Activated naive CD4-positive, alpha-beta T cell treated with anti-CD3 and anti-CD28 coated beads for 36 hours (primary cell): ENCODE measurements at regions of chr11 and their contacts with region 1.

Region 1: DNA sequence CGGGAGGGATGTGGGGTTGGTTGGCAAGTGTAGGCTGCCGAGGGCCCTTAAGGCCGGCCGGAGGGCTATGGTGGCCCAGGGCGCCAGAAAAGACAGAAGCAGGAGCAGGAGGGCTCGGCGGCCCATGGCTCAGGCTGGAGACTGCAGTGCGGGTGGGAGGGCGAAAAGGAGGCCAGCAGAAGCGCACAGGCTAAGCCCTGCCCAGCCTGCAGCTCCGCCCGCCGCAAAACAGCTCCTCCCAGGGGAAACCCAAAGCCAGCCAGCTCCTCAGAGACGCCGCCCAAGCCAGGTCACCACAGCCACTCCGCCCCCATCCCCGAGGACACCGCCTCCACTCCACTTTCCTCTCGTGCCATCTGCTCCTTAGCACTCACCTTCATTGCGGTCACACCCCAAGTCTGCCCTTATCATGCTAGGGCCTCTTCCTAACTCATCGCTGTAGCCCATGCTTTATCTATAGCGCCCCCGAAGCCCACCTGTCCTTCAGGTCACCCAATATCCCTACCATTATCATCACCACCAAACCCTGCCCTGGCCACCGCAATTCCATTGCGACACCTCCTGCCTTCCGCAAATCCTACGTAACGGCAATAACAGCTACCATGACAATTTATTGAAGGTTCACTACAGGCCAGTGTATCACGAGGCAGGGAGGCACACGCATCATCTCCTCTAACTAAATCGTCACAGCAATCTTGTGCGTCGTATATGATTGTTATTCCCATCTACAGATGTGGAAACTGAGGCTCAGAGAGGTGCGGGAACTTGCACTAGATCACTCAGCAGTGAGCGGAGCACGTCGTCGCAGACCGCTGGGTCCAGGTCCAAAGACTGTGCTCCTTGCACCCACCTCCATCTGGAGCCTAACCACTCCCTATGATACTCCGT is at the start of gene PRCP:
- DNase-seq: peak; percentile 97
- H3K4me3 Mint-ChIP-seq: peak within 1 kb of the TSS; percentile 99
- H3K27ac Mint-ChIP-seq: peak within 1 kb of the TSS; percentile 99
- H3K4me1 Mint-ChIP-seq: peaks cover 48% of the 10 kb centered on the region
- H3K27me3 Mint-ChIP-seq: no peaks in the 10 kb centered on the region
- total RNA-seq, gene PRCP: 23.0 to 23.3 TPM

Region 2: GRCh38 chr11:82718307-82718706 is 182.2 kb before region 1 on chr11:
- CTCF ChIA-PET with region 1: interaction called, 5 read pairs
- intact Hi-C with region 1: loop called (anchors 1 kb)
- DNase-seq: peak; percentile 44
- H3K4me3 Mint-ChIP-seq: no peak overlapping the region
- H3K27ac Mint-ChIP-seq: no peak overlapping the region
- H3K4me1 Mint-ChIP-seq: peaks cover 4% of the 10 kb centered on the region
- H3K27me3 Mint-ChIP-seq: no peaks in the 10 kb centered on the region

Region 3: GRCh38 chr11:82959987-82960778 is 59.7 kb after region 1 on chr11:
- CTCF ChIA-PET with region 1: no interaction called
- intact Hi-C with region 1: loop called (anchors 1 kb)
- DNase-seq: peak; percentile 55
- H3K4me3 Mint-ChIP-seq: peak overlapping the region; percentile 21
- H3K27ac Mint-ChIP-seq: peak overlapping the region; percentile 68
- H3K4me1 Mint-ChIP-seq: peaks cover 82% of the 10 kb centered on the region
- H3K27me3 Mint-ChIP-seq: no peaks in the 10 kb centered on the region

Region 4: DNA sequence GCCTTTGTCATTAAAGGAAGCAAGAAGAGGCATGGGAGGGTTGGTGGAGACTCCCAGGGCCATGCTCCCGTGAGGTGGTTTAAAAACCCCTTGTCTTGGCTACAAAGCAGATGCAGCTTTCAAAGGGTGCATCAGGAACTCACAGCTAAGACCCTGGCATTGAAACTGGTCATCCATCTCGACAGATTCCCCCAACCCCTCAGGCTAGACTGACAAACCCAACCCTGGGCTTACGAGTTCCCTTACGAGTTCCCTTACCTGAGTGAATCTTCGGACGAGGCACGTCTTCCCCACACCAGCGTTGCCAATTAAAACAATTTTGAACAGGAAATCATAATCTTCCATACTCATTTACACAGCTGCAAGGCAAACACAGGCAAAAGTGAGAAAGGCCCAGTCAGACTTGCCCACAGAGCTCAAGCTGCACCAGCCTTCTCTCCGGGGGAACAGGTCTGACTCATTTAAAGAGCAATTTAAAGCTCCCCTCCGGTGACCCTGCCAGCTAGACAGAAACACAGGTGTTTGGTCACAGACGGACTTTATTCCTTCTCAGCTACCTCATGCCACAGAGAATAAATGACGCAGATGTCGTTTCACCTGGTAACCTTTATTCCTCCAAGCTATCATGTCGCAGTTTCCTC is 96.6 kb after region 1 on chr11:
- CTCF ChIA-PET with region 1: no interaction called
- intact Hi-C with region 1: loop called (anchors 2 kb)
- DNase-seq: peak; percentile 46
- H3K4me3 Mint-ChIP-seq: no peak overlapping the region
- H3K27ac Mint-ChIP-seq: peak overlapping the region; percentile 12
- H3K4me1 Mint-ChIP-seq: peaks cover 78% of the 10 kb centered on the region
- H3K27me3 Mint-ChIP-seq: no peaks in the 10 kb centered on the region

Region 5: DNA sequence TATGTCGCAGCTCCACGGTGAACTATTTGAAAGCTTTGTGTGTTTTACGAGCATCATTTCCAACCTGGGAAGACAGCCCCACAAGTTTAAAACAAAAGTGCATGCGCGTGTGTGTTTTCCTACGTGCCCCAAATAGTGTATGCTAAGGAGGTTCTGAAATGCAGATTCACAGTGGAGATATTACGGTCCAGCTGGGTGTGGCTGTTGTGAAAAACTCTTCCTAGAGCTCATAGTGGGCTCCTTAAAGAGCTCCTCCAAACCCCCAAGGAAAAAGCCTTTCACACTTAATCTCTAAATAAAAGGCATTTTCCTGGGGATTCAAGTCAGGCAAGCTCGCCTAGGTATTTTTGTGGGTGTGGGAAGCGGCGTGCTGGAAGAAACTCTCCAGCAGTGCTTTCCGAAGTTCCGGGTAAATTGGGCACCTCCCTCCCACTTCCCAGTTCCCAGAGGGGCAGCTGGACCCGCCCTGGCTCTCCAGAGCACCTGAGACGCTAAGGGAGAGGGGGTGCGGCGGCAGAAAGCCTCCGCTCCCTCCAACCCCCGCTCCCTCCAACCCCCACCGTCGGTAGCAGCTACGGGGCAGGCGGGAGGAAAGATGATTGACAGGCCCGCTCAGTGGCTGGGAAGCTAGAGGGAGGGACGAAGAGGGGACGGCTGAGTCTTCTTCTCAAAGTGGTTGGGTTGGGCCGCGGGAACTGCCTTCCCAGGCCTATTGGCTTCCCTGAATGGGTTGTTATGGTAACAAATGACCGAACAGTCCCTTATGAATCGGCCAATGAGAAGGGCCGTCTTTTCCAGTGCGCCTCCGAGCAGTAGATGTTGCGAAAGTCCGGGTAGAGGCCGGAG is 255.9 kb after region 1 on chr11:
- CTCF ChIA-PET with region 1: no interaction called
- intact Hi-C with region 1: loop called (anchors 1 kb)
- DNase-seq: peak; percentile 99
- H3K4me3 Mint-ChIP-seq: peak overlapping the region; percentile 98
- H3K27ac Mint-ChIP-seq: peak overlapping the region; percentile 100
- H3K4me1 Mint-ChIP-seq: peaks cover 26% of the 10 kb centered on the region
- H3K27me3 Mint-ChIP-seq: no peaks in the 10 kb centered on the region

Region 6: DNA sequence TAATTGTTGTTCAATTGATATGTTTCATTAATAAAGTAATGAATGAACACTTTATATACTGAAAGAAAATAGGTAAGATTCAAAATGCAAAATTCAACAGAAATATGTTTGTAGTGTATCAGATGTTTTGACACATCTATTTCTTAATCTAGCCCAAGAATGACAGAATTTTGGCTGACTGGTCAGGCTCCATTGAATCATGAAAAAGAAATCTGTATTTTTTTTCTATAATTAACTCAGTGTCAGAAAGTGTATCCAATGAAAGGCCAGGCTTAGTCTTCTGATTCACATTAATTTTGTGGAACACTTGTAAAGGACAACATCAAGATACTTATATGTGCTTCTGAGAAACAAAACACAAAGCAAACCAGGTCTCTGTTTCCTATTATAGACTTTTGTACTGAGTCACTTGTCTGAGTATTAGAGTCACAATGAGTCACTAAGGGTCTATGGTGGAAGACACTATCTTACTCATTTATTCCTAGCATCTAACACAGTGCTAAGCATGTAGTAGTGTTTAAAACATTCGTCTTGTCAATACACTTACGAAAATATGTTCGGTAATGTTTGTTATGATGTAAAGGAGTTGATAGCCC is 683.3 kb after region 1 on chr11:
- CTCF ChIA-PET with region 1: no interaction called
- intact Hi-C with region 1: loop called (anchors 1 kb)
- DNase-seq: no peak
- H3K4me3 Mint-ChIP-seq: no peak overlapping the region
- H3K27ac Mint-ChIP-seq: no peak overlapping the region
- H3K4me1 Mint-ChIP-seq: peaks cover 4% of the 10 kb centered on the region
- H3K27me3 Mint-ChIP-seq: no peaks in the 10 kb centered on the region